HepG2 (cell line): ENCODE measurements at regions of chr1 and their contacts with region 1.

Region 1: DNA sequence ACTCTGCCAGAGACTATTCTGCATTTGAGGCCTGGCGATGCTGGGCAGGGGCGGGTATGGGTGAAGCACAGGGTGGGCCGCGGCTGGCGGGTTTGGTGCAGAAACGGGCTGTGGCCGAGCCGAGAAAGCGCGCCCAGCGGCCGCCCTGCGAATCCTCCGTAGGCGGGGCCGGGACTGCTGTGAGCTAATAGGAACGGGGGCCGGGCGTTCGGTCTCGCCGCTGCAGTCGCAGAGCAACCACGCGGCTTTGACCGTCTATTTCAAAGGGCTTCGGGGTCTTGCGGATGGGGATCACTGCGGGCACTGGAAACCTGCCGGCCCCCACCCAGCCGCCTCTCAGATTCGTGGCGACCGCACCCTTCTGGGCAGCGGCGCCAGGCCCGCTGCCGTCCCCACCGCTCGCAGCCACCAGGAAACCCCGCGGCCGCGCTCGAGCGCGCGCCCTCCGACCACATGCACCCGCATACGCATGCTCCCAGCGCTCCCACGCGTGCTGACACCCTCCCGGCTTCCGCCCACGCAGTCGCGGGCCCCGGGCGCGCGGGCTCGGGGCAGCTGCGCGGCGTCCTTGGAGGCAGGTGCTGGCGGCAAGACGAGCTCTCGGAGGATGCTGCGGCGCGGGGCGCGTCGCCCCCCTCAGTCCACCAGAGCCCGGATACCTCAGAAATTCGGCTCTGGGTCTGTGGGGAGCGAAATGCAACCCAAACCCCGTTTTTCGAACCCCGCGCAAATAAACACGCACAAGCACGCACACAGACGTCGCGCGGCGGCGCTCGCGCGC is 32.6 kb downstream of the DNTTIP2 start:
- DNase-seq: peak; percentile 76
- ATAC-seq: peak; percentile 83
- H3K4me3 ChIP-seq: peak overlapping the region; percentile 90 to 91 (median 91)
- H3K27ac ChIP-seq: peak overlapping the region; percentile 88
- H3K4me1 ChIP-seq: peaks cover 20% of the 10 kb centered on the region
- H3K27me3 ChIP-seq: no peaks in the 10 kb centered on the region; a peak in 1 of 5 replicates
- CTCF ChIP-seq: peak; percentile 56
- EP300 ChIP-seq: no peak
- POLR2A ChIP-seq: peak; percentile 69 to 77
- RAD21 ChIP-seq: no peak; the same call in 1 of the 2 replicates

Region 2: GRCh38 chr1:93304716-93305138 is 541.7 kb before region 1 on chr1:
- CTCF ChIA-PET with region 1: no interaction called
- POLR2A ChIA-PET with region 1: no interaction called
- in situ Hi-C with region 1: no loop called
- intact Hi-C with region 1: loop called (anchors 10 kb)
- DNase-seq: peak; percentile 65
- ATAC-seq: no peak
- H3K4me3 ChIP-seq: no peak overlapping the region
- H3K27ac ChIP-seq: no peak overlapping the region
- H3K4me1 ChIP-seq: no peaks in the 10 kb centered on the region
- H3K27me3 ChIP-seq: no peaks in the 10 kb centered on the region
- CTCF ChIP-seq: peak; percentile 83
- EP300 ChIP-seq: no peak
- POLR2A ChIP-seq: no peak
- RAD21 ChIP-seq: peak; percentile 85

Region 3: GRCh38 chr1:93437976-93438605 is 408.3 kb before region 1 on chr1:
- CTCF ChIA-PET with region 1: interaction called, 3 read pairs
- POLR2A ChIA-PET with region 1: no interaction called
- in situ Hi-C with region 1: no loop called
- intact Hi-C with region 1: loop called (anchors 2 kb)
- DNase-seq: peak; percentile 49
- ATAC-seq: no peak
- H3K4me3 ChIP-seq: no peak overlapping the region
- H3K27ac ChIP-seq: no peak overlapping the region
- H3K4me1 ChIP-seq: peaks cover 27% of the 10 kb centered on the region
- H3K27me3 ChIP-seq: no peaks in the 10 kb centered on the region; a peak in 1 of 5 replicates
- CTCF ChIP-seq: peak; percentile 70
- EP300 ChIP-seq: no peak
- POLR2A ChIP-seq: no peak
- RAD21 ChIP-seq: peak; percentile 36; the same call in 1 of the 2 replicates

Region 4: DNA sequence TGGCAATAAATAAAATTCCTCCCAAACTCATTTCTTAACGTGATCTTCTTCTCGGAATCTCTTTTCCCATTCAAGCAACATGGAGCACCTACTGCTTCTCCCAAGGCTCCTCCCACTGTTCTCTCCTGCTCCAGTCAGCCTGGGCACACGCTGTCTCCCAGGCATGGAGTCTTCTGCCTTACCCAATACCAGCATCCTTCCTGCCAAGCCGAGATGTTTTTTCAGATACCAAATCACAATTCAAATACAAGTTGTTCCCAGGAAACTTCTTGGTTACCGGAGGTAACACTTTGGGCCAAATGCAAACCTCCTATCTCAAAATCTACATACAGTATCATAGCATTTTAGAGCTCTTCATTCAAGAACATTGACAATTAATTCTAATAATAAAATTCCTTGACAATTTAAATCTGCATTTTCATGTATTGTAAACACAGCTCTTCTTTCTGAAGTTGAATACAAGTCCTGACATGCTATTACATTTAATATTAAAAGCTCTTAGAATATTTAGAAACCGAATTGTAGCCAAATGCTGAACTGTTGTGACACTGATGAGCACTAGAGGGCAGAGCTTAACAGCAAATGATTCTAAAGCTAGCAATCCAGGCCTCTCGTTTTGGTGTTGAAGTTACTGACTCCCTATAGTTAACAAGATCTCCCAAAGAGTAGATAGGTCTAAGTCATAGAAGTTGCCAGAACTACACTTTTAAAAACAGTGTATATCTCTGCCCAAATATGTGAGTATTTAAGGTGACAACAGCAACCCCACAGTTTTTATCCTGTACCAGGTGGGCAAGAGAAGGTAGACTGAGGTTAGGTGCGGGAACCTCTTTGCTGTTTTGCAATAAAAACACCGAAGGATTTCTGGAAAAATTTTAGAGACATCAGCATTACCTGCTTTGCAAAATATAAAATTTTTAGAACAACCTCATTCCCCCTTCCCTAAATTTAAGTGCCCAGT is 217.0 kb before region 1 on chr1:
- CTCF ChIA-PET with region 1: interaction called, 21 read pairs
- POLR2A ChIA-PET with region 1: interaction called, 9 read pairs
- in situ Hi-C with region 1: no loop called
- intact Hi-C with region 1: loop called (anchors 1 kb)
- DNase-seq: peak; percentile 65
- ATAC-seq: peak; percentile 71
- H3K4me3 ChIP-seq: no peak overlapping the region
- H3K27ac ChIP-seq: no peak overlapping the region
- H3K4me1 ChIP-seq: peaks cover 26% of the 10 kb centered on the region
- H3K27me3 ChIP-seq: no peaks in the 10 kb centered on the region
- CTCF ChIP-seq: peak; percentile 84
- EP300 ChIP-seq: no peak
- POLR2A ChIP-seq: no peak
- RAD21 ChIP-seq: peak; percentile 89

Region 5: DNA sequence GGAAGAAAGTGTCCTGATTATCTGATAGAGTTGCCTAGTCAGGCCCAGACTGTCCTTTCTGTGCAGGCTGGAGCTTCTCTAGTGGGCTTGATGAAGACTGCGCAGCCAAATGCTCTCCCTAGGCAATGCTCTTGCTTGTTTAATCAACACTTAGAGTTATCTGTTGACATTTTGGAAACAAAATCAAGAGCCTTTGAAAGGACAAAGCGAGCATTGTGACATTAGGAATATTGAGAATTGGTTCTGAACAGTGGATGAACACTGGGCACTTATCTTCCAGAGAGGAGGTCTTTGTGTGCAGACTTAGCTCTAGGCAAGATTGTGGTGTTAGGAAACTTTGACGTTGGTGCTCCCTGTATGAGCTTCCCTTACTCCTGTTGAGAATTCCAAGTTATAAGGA is 61.9 kb before region 1 on chr1:
- CTCF ChIA-PET with region 1: no interaction called
- POLR2A ChIA-PET with region 1: no interaction called
- in situ Hi-C with region 1: no loop called
- intact Hi-C with region 1: no loop called
- DNase-seq: peak; percentile 76
- ATAC-seq: peak; percentile 94
- H3K4me3 ChIP-seq: no peak overlapping the region
- H3K27ac ChIP-seq: peak overlapping the region; percentile 42
- H3K4me1 ChIP-seq: peaks cover 42% of the 10 kb centered on the region
- H3K27me3 ChIP-seq: no peaks in the 10 kb centered on the region
- CTCF ChIP-seq: no peak
- EP300 ChIP-seq: peak in 1 of 2 experiments; percentile 28; a peak in 1 of 4 replicates
- POLR2A ChIP-seq: no peak
- RAD21 ChIP-seq: no peak

Region 6: DNA sequence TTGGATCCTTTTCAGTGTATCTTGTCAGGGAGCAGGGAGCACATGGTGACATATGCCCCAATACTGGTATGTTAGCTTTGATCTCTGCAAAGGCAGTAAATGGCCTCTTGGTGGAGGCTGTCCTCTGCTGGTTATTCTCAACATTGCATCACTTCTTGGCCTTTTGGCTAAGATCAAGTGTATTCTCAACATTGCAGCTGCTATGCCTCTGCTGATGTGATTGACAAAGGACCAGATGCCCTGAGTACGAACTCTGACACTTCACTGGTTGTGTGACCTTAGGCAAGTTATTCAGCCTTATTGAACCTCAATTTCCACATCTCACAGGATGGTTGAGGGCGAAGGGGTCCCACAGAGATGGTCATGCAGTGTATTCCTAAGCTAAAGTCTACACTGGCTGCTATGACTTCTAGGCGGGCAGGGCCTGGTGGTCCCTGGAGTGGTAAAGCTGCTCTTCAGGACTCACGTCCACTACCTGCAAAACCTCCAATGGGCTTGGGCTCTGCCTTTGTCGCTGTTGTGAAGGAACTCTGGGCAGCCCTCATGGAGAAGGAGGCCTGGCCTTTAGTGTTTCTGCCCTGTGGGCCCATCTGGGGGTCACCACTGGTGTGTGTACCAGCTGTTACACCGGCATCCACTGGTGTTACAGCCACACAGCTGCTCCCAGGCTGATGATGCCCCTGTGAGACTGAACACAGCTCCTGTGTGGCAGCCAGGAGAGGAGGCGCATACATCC is 32.2 kb before region 1 on chr1:
- CTCF ChIA-PET with region 1: interaction called, 4 read pairs
- POLR2A ChIA-PET with region 1: interaction called, 11 read pairs
- in situ Hi-C with region 1: no loop called
- intact Hi-C with region 1: loop called (anchors 2 kb)
- DNase-seq: peak; percentile 79
- ATAC-seq: peak; percentile 84
- H3K4me3 ChIP-seq: no peak overlapping the region
- H3K27ac ChIP-seq: no peak overlapping the region
- H3K4me1 ChIP-seq: peaks cover 30% of the 10 kb centered on the region
- H3K27me3 ChIP-seq: no peaks in the 10 kb centered on the region
- CTCF ChIP-seq: peak; percentile 99
- EP300 ChIP-seq: no peak; a peak in 1 of 4 replicates
- POLR2A ChIP-seq: no peak
- RAD21 ChIP-seq: peak; percentile 98

Region 7: DNA sequence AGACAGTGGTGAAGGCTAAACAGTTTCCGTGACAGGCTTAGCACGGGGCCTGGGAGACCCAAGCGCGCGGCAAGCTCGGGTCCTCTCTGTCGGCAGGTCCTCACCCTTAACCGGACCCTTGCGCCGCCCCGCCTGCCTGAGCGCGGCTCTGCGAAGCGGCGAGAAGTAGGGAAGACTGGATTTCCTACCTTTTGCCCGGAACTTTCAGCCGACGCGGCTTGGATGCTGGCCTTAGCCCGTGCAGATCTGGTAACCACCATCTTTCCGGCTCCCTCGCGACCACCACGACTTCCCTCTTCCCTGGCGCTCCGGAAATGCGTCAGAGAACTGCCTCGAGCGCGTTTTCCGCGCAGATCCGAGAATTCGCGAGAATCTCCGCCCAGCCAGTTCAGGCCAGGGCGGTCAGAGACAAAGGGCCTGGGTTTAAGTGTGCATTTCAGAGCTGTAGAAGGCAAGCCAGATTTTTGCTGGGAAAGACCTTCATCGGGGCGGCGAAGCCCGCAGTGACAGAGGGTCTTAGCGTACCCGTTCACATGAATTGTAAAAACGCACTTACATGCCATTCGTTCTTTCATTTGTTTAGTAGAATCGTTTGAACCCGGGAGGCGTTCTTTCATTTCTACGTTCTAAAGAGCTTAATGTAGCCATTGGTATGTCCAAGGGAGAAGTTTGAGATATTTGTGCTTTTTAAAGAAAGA is 32.6 kb after region 1 on chr1 and contains the start of gene DNTTIP2:
- CTCF ChIA-PET with region 1: no interaction called
- POLR2A ChIA-PET with region 1: interaction called, 11 read pairs
- in situ Hi-C with region 1: no loop called
- intact Hi-C with region 1: no loop called
- DNase-seq: peak; percentile 87
- ATAC-seq: peak; percentile 96
- H3K4me3 ChIP-seq: peak within 1 kb of the TSS; percentile 84 to 97 (median 95)
- H3K27ac ChIP-seq: peak within 1 kb of the TSS; percentile 92
- H3K4me1 ChIP-seq: peaks cover 31% of the 10 kb centered on the region
- H3K27me3 ChIP-seq: no peaks in the 10 kb centered on the region; a peak in 1 of 5 replicates
- CTCF ChIP-seq: peak; percentile 22; the same call in 1 of the 2 replicates
- EP300 ChIP-seq: 0 out of 4 replicates have a peak, but pooled peaks of 1 of the 2 experiments have one; percentile 45
- POLR2A ChIP-seq: peak; percentile 95 to 99
- RAD21 ChIP-seq: no peak; the same call in 1 of the 2 replicates
- total RNA-seq, gene DNTTIP2: 63.3 and 93.0 TPM in 2 replicates